Breast epithelium (tissue), 4 donors: ENCODE measurements at regions of chr14 and their contacts with region 1.

Region 1: GRCh38 chr14:84234284-84234683 is 1295.7 kb upstream of the FLRT2 start:
- DNase-seq: no peak
- H3K4me3 ChIP-seq: no peak overlapping the region
- H3K27ac ChIP-seq: no peak overlapping the region
- H3K4me1 ChIP-seq: no peaks in the 10 kb centered on the region
- H3K27me3 ChIP-seq: no peaks in the 10 kb centered on the region
- CTCF ChIP-seq: no peak
- POLR2A ChIP-seq: no peak

Region 2: GRCh38 chr14:84247693-84248092 is 13.4 kb after region 1 on chr14:
- intact Hi-C with region 1: no loop called
- DNase-seq: no peak
- H3K4me3 ChIP-seq: no peak overlapping the region
- H3K27ac ChIP-seq: no peak overlapping the region
- H3K4me1 ChIP-seq: no peaks in the 10 kb centered on the region
- H3K27me3 ChIP-seq: no peaks in the 10 kb centered on the region
- CTCF ChIP-seq: no peak
- POLR2A ChIP-seq: no peak

Region 3: GRCh38 chr14:84403572-84403971 is 169.3 kb after region 1 on chr14:
- intact Hi-C with region 1: loop called (anchors 5 kb)
- DNase-seq: no peak
- H3K4me3 ChIP-seq: no peak overlapping the region
- H3K27ac ChIP-seq: no peak overlapping the region
- H3K4me1 ChIP-seq: no peaks in the 10 kb centered on the region
- H3K27me3 ChIP-seq: no peaks in the 10 kb centered on the region
- CTCF ChIP-seq: no peak
- POLR2A ChIP-seq: no peak